ENCODE measurements at regions of chr3 and their contacts with region 1.

Region 1: DNA sequence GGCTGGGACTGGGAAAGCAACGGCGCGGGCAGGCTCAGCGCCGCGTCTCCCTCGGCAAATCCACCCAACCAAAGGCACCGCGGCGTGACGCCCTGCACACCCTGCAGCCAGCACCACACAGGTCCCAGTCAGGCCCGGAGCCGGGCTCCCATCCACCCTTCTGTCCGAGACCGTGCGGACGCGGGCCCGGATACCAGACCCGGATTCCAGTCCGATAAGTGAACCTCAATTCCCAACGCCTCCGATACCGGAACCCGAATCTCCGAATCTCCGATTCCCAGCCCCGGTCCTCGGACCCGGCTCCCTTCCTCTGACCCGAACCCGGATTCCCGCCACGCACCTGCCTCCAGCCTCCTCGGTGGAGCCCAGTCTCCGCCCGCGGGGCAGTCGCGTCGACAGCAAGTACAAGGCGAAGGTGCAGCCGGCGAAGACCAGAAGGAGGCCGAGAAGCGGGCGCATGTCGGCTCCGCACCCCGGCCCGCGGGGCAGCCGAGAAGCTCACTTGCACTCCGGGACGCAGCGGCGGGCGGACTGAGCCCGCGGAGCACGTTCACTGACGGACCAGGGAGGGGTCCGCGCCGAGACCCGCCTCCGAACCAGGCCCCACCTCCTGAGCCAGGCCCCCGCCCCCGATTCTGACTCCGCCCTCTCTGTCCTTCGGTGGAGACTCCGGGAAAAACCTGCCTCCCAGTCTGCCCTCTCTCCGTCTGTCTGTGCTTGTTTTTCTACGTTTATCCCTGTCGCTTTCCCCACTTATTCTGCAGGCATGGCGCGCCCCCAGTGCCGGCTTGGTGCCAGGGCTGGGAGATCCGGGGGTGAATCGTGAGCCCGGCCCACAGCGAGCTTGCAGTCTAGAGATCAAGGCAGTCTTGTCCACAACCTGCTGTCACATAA is at the start of gene TMEM41A:
- DNase-seq: peak; percentile 94 to 96
- ATAC-seq: peak; percentile 99 to 100 (median 100)
- H3K4me3 ChIP-seq: peak within 1 kb of the TSS; percentile 95
- H3K27ac ChIP-seq: peak within 1 kb of the TSS; percentile 90
- H3K4me1 ChIP-seq: peaks cover 15% of the 10 kb centered on the region
- H3K27me3 ChIP-seq: no peaks in the 10 kb centered on the region
- CTCF ChIP-seq: no peak
- total RNA-seq, gene TMEM41A: 8.7 to 12.7 (median 10.4) TPM

Region 2: GRCh38 chr3:185362850-185363661 is 135.7 kb before region 1 on chr3 and contains the start of gene MAP3K13:
- intact Hi-C with region 1: loop called in 1 of 2 experiments (anchors 5 kb)
- DNase-seq: peak; percentile 71 to 81
- ATAC-seq: peak; percentile 98 to 99 (median 99)
- H3K4me3 ChIP-seq: peak within 1 kb of the TSS; percentile 70
- H3K27ac ChIP-seq: peak within 1 kb of the TSS; percentile 72
- H3K4me1 ChIP-seq: no peaks in the 10 kb centered on the region
- H3K27me3 ChIP-seq: no peaks in the 10 kb centered on the region
- CTCF ChIP-seq: no peak
- total RNA-seq, gene MAP3K13: 5.0 to 7.6 (median 6.9) TPM

Region 3: DNA sequence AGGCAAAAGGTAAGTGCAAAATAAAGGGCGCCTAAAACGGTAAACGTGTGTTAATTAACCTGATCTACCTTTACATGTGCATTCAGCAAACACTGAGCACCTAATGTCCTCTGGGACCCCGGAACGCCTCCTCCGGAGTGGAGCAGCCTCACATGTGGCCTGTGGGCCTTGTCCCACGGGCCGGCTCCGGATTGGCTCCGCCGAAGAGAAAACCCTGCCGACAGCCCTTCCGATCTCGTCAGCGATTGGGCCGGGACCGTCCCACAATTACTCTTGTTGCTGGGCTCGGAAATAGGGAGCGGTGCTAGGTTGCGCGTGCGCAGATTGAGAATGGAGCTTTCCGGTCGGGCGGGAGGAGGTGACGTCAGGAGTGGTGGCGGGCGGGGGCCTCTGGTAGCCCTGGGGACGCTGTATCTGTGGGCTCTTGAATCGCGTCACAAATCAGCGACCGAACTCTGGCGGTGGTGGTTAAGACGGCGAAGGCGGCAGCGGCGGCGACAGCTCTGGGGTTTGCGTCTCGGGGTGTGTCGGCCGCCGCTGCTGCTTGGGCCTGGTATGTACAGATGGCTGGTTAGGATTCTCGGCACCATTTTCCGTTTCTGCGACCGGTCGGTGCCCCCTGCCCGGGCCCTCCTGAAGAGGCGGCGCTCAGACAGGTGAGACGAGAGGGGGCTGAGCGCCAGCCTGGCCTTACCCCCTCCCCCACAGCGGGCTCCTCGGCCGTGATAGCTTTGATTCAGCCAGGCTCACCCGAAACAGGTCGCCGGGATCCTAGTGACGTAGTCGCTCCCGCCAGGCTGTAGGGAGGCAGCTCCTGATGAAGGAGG is 87.3 kb after region 1 on chr3 and contains the start of gene SENP2:
- intact Hi-C with region 1: loop called in 1 of 2 experiments (anchors 5 kb)
- DNase-seq: peak; percentile 99 to 100
- ATAC-seq: peak; percentile 98 to 99 (median 99)
- H3K4me3 ChIP-seq: peak within 1 kb of the TSS; percentile 96
- H3K27ac ChIP-seq: peak within 1 kb of the TSS; percentile 97
- H3K4me1 ChIP-seq: peaks cover 18% of the 10 kb centered on the region
- H3K27me3 ChIP-seq: no peaks in the 10 kb centered on the region
- CTCF ChIP-seq: no peak
- total RNA-seq, gene SENP2: 31.2 to 43.6 (median 40.8) TPM